ENCODE measurements at regions of chr17 and their contacts with region 1.

Region 1: GRCh38 chr17:32783602-32784001 is 93.3 kb downstream of the MYO1D start:
- DNase-seq: peak in 2 of 9 experiments; percentile 57 to 68
- ATAC-seq: peak; percentile 62
- H3K4me3 ChIP-seq: no peak overlapping the region
- H3K4me3 Mint-ChIP-seq: no peak overlapping the region
- H3K27ac ChIP-seq: no peak overlapping the region
- H3K27ac Mint-ChIP-seq: no peak overlapping the region
- H3K4me1 ChIP-seq: no peaks in the 10 kb centered on the region
- H3K4me1 Mint-ChIP-seq: no peaks in the 10 kb centered on the region
- H3K27me3 ChIP-seq: no peaks in the 10 kb centered on the region
- H3K27me3 Mint-ChIP-seq: no peaks in the 10 kb centered on the region
- CTCF ChIP-seq: peak; percentile 87

Region 2: GRCh38 chr17:32191306-32191705 is 592.3 kb before region 1 on chr17:
- CTCF ChIA-PET with region 1: no interaction called
- POLR2A ChIA-PET with region 1: no interaction called
- intact Hi-C with region 1: no loop called
- DNase-seq: no peak
- ATAC-seq: no peak
- H3K4me3 ChIP-seq: no peak overlapping the region
- H3K4me3 Mint-ChIP-seq: no peak overlapping the region
- H3K27ac ChIP-seq: no peak overlapping the region
- H3K27ac Mint-ChIP-seq: no peak overlapping the region
- H3K4me1 ChIP-seq: no peaks in the 10 kb centered on the region
- H3K4me1 Mint-ChIP-seq: no peaks in the 10 kb centered on the region
- H3K27me3 ChIP-seq: no peaks in the 10 kb centered on the region
- H3K27me3 Mint-ChIP-seq: no peaks in the 10 kb centered on the region
- CTCF ChIP-seq: no peak

Region 3: DNA sequence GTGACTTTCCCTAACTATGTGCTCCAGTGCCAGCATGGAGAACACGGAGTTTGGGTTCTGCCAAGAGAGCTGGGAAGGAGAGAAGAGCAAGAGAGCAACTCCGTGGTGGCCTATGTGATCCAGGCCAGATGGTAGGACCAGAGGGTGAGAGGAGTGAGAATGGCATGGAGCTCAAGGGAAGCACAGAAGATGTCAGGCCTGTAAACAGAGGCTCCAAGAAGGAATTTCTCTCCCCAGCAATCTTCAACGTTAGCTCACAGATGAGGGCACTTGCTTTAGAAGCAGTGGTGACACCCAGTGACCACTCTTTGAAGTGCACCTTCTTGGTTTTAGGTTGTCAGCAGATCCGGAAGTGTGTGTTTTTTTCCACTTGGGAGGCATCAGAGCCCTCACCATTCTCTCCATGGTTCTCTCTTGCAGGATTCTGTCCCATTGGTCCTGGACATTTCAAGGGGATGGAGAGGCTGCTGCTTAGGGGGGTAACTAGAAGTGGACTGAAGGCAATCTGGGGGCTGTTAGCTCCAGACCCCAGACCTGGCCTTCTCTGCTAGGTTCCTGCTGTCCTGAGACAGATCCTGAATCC is 126.3 kb after region 1 on chr17:
- CTCF ChIA-PET with region 1: interaction called, 46 read pairs
- POLR2A ChIA-PET with region 1: no interaction called
- intact Hi-C with region 1: loop called (anchors 1 kb)
- DNase-seq: peak in 8 of 9 experiments; percentile 4 to 68 (median 50)
- ATAC-seq: peak; percentile 58
- H3K4me3 ChIP-seq: no peak overlapping the region
- H3K4me3 Mint-ChIP-seq: no peak overlapping the region
- H3K27ac ChIP-seq: no peak overlapping the region
- H3K27ac Mint-ChIP-seq: no peak overlapping the region
- H3K4me1 ChIP-seq: no peaks in the 10 kb centered on the region
- H3K4me1 Mint-ChIP-seq: no peaks in the 10 kb centered on the region
- H3K27me3 ChIP-seq: no peaks in the 10 kb centered on the region
- H3K27me3 Mint-ChIP-seq: peaks cover 14% of the 10 kb centered on the region
- CTCF ChIP-seq: peak; percentile 36

Region 4: DNA sequence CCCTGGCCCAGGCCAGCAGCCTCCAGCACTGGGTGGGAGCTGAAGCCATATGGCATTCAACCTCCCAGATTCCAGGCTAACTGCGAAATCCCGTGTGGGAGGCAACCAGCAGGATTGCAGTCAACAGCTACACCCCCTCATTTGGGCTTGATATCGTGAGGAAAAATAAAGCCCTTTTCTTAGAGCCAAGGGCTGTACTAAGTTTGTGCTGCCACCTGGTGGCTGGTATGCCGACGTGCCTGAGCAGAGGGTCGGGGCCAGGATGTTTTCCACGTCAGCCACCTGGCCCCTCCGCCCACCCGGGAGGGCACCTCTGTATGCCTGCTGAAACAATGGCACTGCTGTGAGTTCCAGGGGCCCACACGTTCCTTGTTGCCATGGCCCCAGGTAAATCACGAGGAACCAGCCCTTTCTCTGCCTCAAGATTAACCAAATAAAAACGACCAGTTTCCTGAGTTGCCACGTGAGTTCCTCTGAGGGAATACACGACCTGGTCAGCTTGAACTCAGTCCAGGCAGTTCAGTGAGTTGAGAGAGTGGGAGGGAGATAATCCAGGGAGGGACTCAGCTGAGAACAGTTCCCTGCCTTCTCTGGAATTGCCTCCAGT is 153.4 kb after region 1 on chr17:
- CTCF ChIA-PET with region 1: interaction called, 145 read pairs
- POLR2A ChIA-PET with region 1: no interaction called
- intact Hi-C with region 1: loop called in 1 of 2 experiments (anchors 1 kb)
- DNase-seq: peak; percentile 16 to 74 (median 66)
- ATAC-seq: peak; percentile 55
- H3K4me3 ChIP-seq: no peak overlapping the region
- H3K4me3 Mint-ChIP-seq: peak overlapping the region; percentile 26
- H3K27ac ChIP-seq: no peak overlapping the region
- H3K27ac Mint-ChIP-seq: no peak overlapping the region
- H3K4me1 ChIP-seq: peaks cover 6% of the 10 kb centered on the region
- H3K4me1 Mint-ChIP-seq: peaks cover 3% of the 10 kb centered on the region
- H3K27me3 ChIP-seq: no peaks in the 10 kb centered on the region
- H3K27me3 Mint-ChIP-seq: peaks cover 31% of the 10 kb centered on the region
- CTCF ChIP-seq: peak; percentile 66

Region 5: DNA sequence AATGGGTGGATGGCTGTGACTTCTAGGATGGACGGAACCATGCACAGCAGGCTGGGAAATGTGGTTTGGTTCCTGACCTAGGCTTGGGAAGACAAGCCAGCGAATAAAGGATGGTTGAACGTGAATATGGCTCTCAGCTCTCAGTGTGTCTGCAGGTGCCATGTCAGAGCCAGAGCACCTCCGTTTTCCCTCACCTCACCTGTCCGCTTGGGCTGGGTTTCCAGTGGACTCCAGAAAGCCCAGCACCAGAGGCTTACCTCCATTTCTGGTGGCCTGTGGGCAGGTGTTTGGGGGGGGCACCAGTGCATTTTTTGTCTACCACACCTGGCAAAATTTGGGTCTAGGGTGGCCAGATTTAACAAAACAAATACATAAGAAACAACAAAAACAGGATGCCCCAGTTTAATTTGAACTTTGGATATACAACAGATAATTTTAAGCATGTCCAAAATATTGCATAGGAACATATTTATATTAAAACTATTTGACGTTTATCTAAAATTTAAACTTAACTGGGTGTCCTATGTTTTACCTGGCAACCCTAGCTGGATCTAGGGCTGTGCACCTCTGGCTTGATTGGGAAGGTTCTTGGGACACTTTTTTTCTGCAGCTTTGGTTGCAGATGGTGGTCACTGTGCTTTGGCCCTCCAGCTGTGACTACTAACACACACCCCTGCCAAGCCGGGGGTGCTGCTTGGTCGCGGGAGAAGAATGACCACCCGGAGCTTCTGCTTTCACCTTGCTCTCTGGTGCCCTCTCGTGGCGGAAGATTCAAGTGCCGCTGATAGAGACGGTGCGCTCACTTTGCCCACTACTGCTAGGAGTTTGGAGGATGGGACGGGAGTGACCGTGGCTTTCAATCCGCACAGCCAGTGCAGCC is 214.4 kb after region 1 on chr17:
- CTCF ChIA-PET with region 1: interaction called, 26 read pairs
- POLR2A ChIA-PET with region 1: no interaction called
- intact Hi-C with region 1: loop called (anchors 1 kb)
- DNase-seq: peak; percentile 56 to 81 (median 69)
- ATAC-seq: peak; percentile 59
- H3K4me3 ChIP-seq: no peak overlapping the region
- H3K4me3 Mint-ChIP-seq: no peak overlapping the region
- H3K27ac ChIP-seq: no peak overlapping the region
- H3K27ac Mint-ChIP-seq: no peak overlapping the region
- H3K4me1 ChIP-seq: peaks cover 8% of the 10 kb centered on the region
- H3K4me1 Mint-ChIP-seq: peaks cover 4% of the 10 kb centered on the region
- H3K27me3 ChIP-seq: peaks cover 0 to 2% of the 10 kb centered on the region in 2 experiments
- H3K27me3 Mint-ChIP-seq: peaks cover 24% of the 10 kb centered on the region
- CTCF ChIP-seq: peak; percentile 83

Region 6: GRCh38 chr17:33750943-33751701 is 967.5 kb after region 1 on chr17:
- CTCF ChIA-PET with region 1: no interaction called
- POLR2A ChIA-PET with region 1: no interaction called
- intact Hi-C with region 1: loop called in 1 of 2 experiments (anchors 2 kb)
- DNase-seq: peak; percentile 32 to 73 (median 57)
- ATAC-seq: peak; percentile 55
- H3K4me3 ChIP-seq: no peak overlapping the region
- H3K4me3 Mint-ChIP-seq: peak overlapping the region; percentile 35
- H3K27ac ChIP-seq: no peak overlapping the region
- H3K27ac Mint-ChIP-seq: no peak overlapping the region
- H3K4me1 ChIP-seq: no peaks in the 10 kb centered on the region
- H3K4me1 Mint-ChIP-seq: peaks cover 6% of the 10 kb centered on the region
- H3K27me3 ChIP-seq: peaks cover 0 to 2% of the 10 kb centered on the region in 2 experiments
- H3K27me3 Mint-ChIP-seq: peaks cover 35% of the 10 kb centered on the region
- CTCF ChIP-seq: peak; percentile 98